Aorta (tissue), 5 donors: ENCODE measurements at regions of chr13 and their contacts with region 1.

Region 1: GRCh38 chr13:110874508-110874960 is 40.3 kb downstream of the ANKRD10 start:
- DNase-seq: peak; percentile 93 to 96
- ATAC-seq: peak; percentile 87
- H3K4me3 ChIP-seq: peak overlapping the region in 1 of 2 donors; percentile 16
- H3K27ac ChIP-seq: no peak overlapping the region
- H3K4me1 ChIP-seq: peaks cover 0 to 2% of the 10 kb centered on the region in 2 donors
- H3K27me3 ChIP-seq: no peaks in the 10 kb centered on the region

Region 2: DNA sequence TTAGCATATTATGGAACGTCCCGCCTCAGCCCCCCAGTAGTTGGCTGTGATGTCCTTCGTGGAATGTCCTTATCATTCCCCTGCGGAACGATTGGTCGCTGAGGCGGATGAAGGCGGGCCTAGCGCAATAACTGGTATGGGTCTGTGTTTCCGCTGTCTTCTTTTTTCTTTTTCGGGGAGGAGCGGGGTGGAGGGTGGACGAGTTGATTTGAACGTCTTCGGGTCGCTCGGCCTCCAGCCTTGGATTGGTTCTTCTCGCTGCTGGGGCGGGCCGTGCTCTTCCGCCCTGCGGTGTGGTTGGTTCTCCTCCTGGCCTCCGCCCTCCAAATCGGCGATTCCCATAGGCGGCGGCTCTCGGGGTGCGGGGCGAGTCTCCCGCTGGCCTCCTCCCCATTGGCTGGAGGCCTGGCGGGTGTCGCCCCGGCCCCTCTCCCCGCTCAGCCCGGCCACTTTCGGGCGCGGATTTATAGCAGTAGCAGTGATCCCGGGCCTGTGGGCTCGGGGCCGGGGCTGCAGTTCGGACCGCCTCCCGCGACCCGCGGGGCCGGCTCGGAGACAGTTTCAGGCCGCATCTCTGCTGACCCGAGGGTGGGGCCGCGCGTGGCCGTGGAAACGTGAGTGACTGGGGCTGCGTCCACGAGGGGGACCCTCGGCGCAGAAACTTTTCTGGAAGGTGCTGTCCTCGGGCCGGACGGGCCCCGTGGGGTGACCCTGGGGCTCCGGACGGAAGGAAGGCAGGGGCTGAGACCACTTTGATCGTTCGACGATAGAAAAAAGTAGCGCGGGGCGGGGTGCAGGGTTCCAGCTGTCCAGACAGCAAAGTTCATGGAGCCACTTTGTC is 158.9 kb before region 1 on chr13:
- intact Hi-C with region 1: loop called in 1 of 2 experiments (anchors 5 kb)
- DNase-seq: peak; percentile 98 to 99
- ATAC-seq: peak; percentile 86
- H3K4me3 ChIP-seq: peak overlapping the region; percentile 59 to 64
- H3K27ac ChIP-seq: peak overlapping the region; percentile 2 to 85
- H3K4me1 ChIP-seq: no peaks in the 10 kb centered on the region
- H3K27me3 ChIP-seq: no peaks in the 10 kb centered on the region

Region 3: GRCh38 chr13:110907951-110908898 is 33.7 kb after region 1 on chr13:
- intact Hi-C with region 1: loop called in 1 of 2 experiments (anchors 5 kb)
- DNase-seq: no peak
- ATAC-seq: no peak
- H3K4me3 ChIP-seq: no peak overlapping the region
- H3K27ac ChIP-seq: no peak overlapping the region
- H3K4me1 ChIP-seq: peaks cover 3 to 4% of the 10 kb centered on the region in 2 donors
- H3K27me3 ChIP-seq: no peaks in the 10 kb centered on the region

Region 4: DNA sequence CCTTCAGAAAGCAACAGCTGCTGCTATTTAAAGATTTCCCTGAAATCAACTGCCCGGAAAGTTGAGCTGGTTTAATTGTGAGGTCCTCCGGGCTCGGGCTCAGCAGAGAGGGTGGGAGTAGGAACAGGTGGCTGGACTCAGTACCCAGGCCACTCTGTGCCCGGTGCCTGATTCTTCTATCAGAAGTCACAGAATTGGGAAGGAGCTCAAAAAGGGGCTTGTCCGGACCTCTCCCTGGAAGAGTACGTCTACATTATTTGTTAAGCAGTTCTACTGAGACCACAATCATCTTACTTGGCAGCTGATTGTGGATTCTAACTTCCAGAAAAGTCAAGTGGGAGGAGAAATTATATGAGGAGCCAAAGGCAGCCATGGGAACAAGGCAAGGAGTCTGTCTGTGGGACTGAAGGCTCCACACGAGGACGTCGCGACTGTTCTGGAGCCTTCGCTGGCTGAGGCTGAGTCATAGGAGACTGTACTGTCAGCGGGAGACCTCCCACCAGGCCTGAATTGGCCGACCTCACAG is 132.0 kb after region 1 on chr13:
- intact Hi-C with region 1: loop called in 1 of 2 experiments (anchors 5 kb)
- DNase-seq: peak; percentile 93
- ATAC-seq: peak; percentile 97
- H3K4me3 ChIP-seq: no peak overlapping the region
- H3K27ac ChIP-seq: peak overlapping the region; percentile 89 to 98
- H3K4me1 ChIP-seq: peaks cover 0 to 3% of the 10 kb centered on the region in 2 donors
- H3K27me3 ChIP-seq: no peaks in the 10 kb centered on the region

Region 5: DNA sequence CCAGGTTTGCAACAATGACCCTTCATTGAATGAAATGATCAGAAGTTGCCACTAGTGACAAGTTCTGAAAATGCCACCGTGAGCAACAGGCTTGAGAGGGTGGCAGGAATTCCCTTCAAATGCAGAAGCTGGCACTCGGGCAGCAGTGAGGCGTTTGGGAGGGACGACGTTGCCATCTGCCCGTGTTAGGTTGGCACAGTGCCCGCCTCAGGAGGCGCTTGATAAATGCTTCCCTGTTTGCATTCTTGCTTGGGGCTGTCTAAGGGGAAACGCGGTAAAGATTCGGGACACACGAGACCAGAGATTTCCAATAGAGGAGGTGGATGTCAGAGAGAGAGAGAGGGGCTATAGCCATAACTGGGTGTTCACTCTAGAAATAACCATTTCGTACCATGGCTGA is 547.8 kb after region 1 on chr13:
- intact Hi-C with region 1: no loop called
- DNase-seq: peak in 1 of 2 donors; percentile 53
- ATAC-seq: no peak
- H3K4me3 ChIP-seq: no peak overlapping the region
- H3K27ac ChIP-seq: no peak overlapping the region
- H3K4me1 ChIP-seq: no peaks in the 10 kb centered on the region
- H3K27me3 ChIP-seq: no peaks in the 10 kb centered on the region